HepG2 (cell line): ENCODE measurements at regions of chr19 and their contacts with region 1.

Region 1: GRCh38 chr19:10543420-10544241 is at the start of gene ATG4D:
- DNase-seq: peak; percentile 41
- ATAC-seq: peak; percentile 85
- H3K4me3 ChIP-seq: peak within 1 kb of the TSS; percentile 78 to 98 (median 89)
- H3K27ac ChIP-seq: peak within 1 kb of the TSS; percentile 76
- H3K4me1 ChIP-seq: peaks cover 17% of the 10 kb centered on the region
- H3K27me3 ChIP-seq: 0 out of 5 replicates have a peak, but pooled peaks cover 0 to 4% of the 10 kb centered on the region in 2 experiments
- CTCF ChIP-seq: no peak
- EP300 ChIP-seq: no peak
- POLR2A ChIP-seq: peak; percentile 41 to 87
- RAD21 ChIP-seq: peak; percentile 24; the same call in 1 of the 2 replicates
- total RNA-seq, gene ATG4D: 9.3 and 19.0 TPM in 2 replicates

Region 2: DNA sequence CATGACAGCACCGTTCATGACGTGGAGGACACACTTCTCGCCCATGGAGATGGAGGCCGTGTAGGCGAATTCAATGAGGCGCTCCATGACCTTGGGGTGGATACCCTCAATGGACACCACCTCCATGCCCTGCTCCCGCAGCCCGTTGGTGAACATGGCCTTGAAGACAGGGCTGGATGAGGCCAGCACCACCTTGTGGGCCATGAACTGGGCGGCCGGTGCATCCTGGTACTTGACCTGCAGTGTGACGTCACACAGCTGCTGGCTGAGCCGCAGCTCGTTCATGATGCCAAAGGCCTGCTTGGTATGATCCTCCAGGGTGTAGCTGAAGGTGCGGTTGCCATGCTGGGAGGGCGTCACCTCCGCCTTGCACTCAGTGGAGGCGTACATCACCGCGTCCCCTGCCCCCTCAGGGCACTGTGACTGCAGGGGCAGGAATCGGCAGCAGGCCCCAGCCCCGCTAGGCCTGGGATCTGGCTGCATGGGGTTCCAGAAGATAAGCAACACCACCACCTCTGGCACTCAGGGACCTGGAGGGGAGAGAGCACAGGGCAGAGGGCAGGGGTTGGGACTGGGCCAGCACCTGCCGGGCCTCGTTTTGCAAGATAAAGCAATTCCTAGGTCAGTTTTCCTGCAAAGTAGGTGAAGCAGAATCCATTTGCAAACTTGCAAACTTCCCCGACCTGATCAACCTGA is 43.9 kb before region 1 on chr19:
- CTCF ChIA-PET with region 1: no interaction called
- POLR2A ChIA-PET with region 1: no interaction called
- in situ Hi-C with region 1: no loop called
- intact Hi-C with region 1: no loop called
- DNase-seq: no peak
- ATAC-seq: no peak
- H3K4me3 ChIP-seq: no peak overlapping the region
- H3K27ac ChIP-seq: peak overlapping the region; percentile 27
- H3K4me1 ChIP-seq: peaks cover 43% of the 10 kb centered on the region
- H3K27me3 ChIP-seq: no peaks in the 10 kb centered on the region
- CTCF ChIP-seq: no peak
- EP300 ChIP-seq: no peak
- POLR2A ChIP-seq: 0 out of 4 replicates have a peak, but pooled peaks of 1 of the 2 experiments have one; percentile 0
- RAD21 ChIP-seq: no peak

Region 3: DNA sequence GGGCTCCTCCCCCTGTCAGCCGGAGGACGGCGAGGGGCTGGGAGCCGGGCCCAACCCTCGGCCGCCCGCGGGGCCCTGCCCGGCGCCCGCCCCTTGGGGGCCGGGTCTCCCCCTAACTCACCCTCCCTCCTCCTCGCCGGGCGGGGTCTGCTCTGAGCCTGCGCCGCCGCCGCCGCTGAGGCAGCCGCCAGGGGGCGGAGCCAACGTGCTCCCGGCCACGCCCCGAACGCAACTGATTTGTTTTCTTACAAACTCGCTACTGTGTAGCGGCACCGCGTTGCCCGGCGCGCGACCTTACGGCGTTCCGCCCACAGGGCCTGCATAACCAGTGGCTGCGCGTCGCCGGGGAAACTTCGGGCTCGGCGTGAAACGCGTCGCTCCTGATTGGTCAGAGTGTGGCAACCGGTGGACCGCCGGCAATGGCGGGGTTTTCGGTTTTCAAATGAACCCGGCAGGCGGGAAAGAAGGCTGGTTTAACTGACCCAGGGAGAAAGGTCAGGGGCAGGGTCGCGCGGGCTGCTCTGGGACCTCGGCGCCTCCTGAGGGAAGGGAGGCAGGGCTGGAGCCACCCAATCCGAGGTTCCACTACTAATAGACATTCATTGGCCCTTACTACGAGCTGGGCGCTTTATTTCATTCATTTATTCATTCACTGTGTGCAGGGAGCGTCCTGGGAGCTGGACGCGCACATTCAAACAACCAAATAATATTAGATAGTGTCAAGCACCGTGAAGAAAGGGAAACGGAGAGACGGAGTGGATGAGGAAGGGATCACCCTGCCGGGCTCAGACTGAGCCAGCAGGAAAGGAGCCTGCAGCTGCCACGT is 25.4 kb after region 1 on chr19 and contains the start of gene CDKN2D:
- CTCF ChIA-PET with region 1: no interaction called
- POLR2A ChIA-PET with region 1: no interaction called
- in situ Hi-C with region 1: no loop called
- intact Hi-C with region 1: loop called (anchors 2 kb)
- DNase-seq: peak; percentile 98
- ATAC-seq: peak; percentile 91
- H3K4me3 ChIP-seq: peak within 1 kb of the TSS; percentile 61 to 85 (median 82)
- H3K27ac ChIP-seq: peak within 1 kb of the TSS; percentile 93
- H3K4me1 ChIP-seq: peaks cover 54% of the 10 kb centered on the region
- H3K27me3 ChIP-seq: no peaks in the 10 kb centered on the region
- CTCF ChIP-seq: 0 out of 2 replicates have a peak, but pooled peaks have one; percentile 20
- EP300 ChIP-seq: peak in 1 of 2 experiments; percentile 42; a peak in 1 of 4 replicates
- POLR2A ChIP-seq: peak; percentile 18 to 71
- RAD21 ChIP-seq: 0 out of 2 replicates have a peak, but pooled peaks have one; percentile 31
- total RNA-seq, gene CDKN2D: 4.8 and 5.4 TPM in 2 replicates